CD14-positive monocyte (primary cell): ENCODE measurements at regions of chr5 and their contacts with region 1.

Region 1: GRCh38 chr5:80069918-80070318 is 34.8 kb downstream of the THBS4 start:
- DNase-seq: peak in 2 of 3 donors; percentile 8 to 39
- H3K4me3 ChIP-seq: peak overlapping the region in 1 of 3 experiments; percentile 4
- H3K4me3 Mint-ChIP-seq: peak overlapping the region; percentile 63 to 68
- H3K27ac ChIP-seq: peak overlapping the region; percentile 60 to 75
- H3K27ac Mint-ChIP-seq: peak overlapping the region; percentile 72 to 95 (median 93)
- H3K4me1 ChIP-seq: peaks cover 49 to 50% of the 10 kb centered on the region in 2 donors
- H3K4me1 Mint-ChIP-seq: peaks cover 63% of the 10 kb centered on the region
- H3K27me3 ChIP-seq: no peaks in the 10 kb centered on the region
- H3K27me3 Mint-ChIP-seq: peaks cover 0 to 3% (median 0%) of the 10 kb centered on the region in 3 donors
- CTCF ChIP-seq: no peak

Region 2: GRCh38 chr5:79982136-79982535 is 87.8 kb before region 1 on chr5:
- intact Hi-C with region 1: loop called in 1 of 2 experiments (anchors 10 kb)
- DNase-seq: no peak
- H3K4me3 ChIP-seq: no peak overlapping the region
- H3K4me3 Mint-ChIP-seq: no peak overlapping the region
- H3K27ac ChIP-seq: no peak overlapping the region
- H3K27ac Mint-ChIP-seq: no peak overlapping the region
- H3K4me1 ChIP-seq: no peaks in the 10 kb centered on the region
- H3K4me1 Mint-ChIP-seq: no peaks in the 10 kb centered on the region
- H3K27me3 ChIP-seq: no peaks in the 10 kb centered on the region
- H3K27me3 Mint-ChIP-seq: no peaks in the 10 kb centered on the region
- CTCF ChIP-seq: no peak

Region 3: DNA sequence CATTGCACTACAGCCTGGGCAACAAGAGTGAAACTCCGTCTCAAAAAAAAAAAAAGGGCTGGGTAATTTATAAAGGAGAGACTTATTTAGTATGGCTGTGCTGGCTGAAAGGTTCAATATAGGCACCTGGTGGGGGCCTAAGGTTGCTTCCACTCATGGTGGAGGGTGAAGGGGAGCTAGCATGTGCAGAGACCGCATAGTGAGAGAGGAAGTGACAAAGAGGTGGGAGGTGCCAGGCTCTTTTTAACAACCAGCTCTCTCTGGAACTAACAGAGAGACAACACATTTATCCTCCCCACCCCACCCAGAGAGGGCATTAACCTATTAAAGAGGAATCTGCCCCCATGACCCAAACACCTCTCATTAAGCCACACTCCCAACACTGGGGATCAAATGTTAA is 214.8 kb after region 1 on chr5:
- intact Hi-C with region 1: no loop called
- DNase-seq: no peak
- H3K4me3 ChIP-seq: no peak overlapping the region
- H3K4me3 Mint-ChIP-seq: no peak overlapping the region
- H3K27ac ChIP-seq: no peak overlapping the region
- H3K27ac Mint-ChIP-seq: peak overlapping the region in 1 of 7 donors; percentile 40
- H3K4me1 ChIP-seq: no peaks in the 10 kb centered on the region
- H3K4me1 Mint-ChIP-seq: peaks cover 6% of the 10 kb centered on the region
- H3K27me3 ChIP-seq: no peaks in the 10 kb centered on the region
- H3K27me3 Mint-ChIP-seq: peaks cover 2 to 3% (median 2%) of the 10 kb centered on the region in 3 donors
- CTCF ChIP-seq: no peak

Region 4: DNA sequence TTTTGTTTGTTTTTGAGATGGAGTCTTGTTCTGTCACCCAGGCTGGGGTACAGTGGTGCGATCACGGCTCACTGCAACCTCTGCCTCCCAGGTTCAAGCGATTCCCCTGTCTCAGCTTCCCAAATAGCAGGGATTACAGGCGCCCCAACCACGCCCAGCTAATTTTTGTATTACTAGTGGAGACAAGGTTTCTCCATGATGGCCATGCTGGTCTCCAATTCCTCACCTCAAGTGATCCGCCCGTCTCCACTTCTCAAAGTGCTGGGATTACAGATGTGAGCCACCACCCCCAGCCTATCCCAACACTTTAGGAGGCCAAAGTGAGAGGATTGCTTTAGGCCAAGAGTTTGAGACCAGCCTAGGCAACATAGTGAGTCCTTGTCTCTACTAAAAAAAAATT is 269.2 kb after region 1 on chr5:
- intact Hi-C with region 1: no loop called
- DNase-seq: no peak
- H3K4me3 ChIP-seq: no peak overlapping the region
- H3K4me3 Mint-ChIP-seq: no peak overlapping the region
- H3K27ac ChIP-seq: no peak overlapping the region
- H3K27ac Mint-ChIP-seq: no peak overlapping the region
- H3K4me1 ChIP-seq: no peaks in the 10 kb centered on the region
- H3K4me1 Mint-ChIP-seq: peaks cover 7% of the 10 kb centered on the region
- H3K27me3 ChIP-seq: no peaks in the 10 kb centered on the region
- H3K27me3 Mint-ChIP-seq: peaks cover 6 to 10% (median 9%) of the 10 kb centered on the region in 3 donors
- CTCF ChIP-seq: no peak